ENCODE measurements at regions of chr1 and their contacts with region 1.

Region 1: DNA sequence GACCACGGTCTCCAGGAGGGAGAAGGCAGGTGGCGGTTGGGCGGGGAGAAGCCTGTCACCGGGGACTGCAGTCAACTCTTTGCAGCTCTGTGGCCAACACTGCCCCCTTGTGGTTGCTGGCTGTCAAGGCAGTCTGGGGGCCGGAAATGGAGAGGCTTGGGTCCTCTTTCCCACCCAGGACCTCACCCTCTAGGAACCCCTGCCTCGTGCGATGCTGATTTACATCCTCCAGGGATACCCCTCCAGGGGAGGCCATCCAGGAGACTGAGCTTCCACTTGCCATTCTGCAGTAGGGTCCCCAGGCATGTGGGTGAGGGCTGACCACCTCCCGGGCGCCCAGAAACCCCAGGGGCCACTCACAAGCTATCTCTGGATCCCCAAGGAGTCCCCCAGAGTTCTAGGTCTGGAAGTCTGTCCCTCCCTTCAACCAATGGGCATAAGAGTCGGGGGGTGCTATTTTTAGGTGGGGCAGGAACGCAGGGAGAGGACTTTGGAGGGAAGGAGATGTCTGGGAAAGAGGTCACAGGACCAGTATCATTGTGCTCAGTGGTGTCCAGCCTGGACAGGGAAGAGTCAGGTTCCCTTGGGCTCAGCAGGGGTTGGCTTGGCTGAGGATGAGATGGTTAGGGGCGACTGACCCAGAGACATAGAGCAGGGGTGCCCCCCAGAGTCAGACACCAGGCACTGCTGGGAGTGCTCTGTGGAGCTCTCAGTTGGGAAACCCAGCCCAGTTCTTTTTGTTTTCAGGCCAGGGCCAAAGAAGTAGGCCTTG is 7.1 kb upstream of the GPR61 start:
- DNase-seq: no peak
- H3K4me3 ChIP-seq: no peak overlapping the region
- H3K27me3 ChIP-seq: no peaks in the 10 kb centered on the region; the same call in 1 of the 2 replicates
- CTCF ChIP-seq: peak; percentile 96

Region 2: GRCh38 chr1:108852221-108852975 is 680.2 kb before region 1 on chr1:
- CTCF ChIA-PET with region 1: no interaction called
- POLR2A ChIA-PET with region 1: no interaction called
- DNase-seq: no peak
- H3K4me3 ChIP-seq: no peak overlapping the region
- H3K27me3 ChIP-seq: no peaks in the 10 kb centered on the region; the same call in 1 of the 2 replicates
- CTCF ChIP-seq: no peak

Region 3: GRCh38 chr1:109263597-109264398 is 268.8 kb before region 1 on chr1:
- CTCF ChIA-PET with region 1: interaction called, 20 read pairs
- POLR2A ChIA-PET with region 1: no interaction called
- DNase-seq: no peak
- H3K4me3 ChIP-seq: no peak overlapping the region
- H3K27me3 ChIP-seq: no peaks in the 10 kb centered on the region
- CTCF ChIP-seq: peak; percentile 99

Region 4: GRCh38 chr1:109397538-109398342 is 134.8 kb before region 1 on chr1 and contains the start of gene SORT1:
- CTCF ChIA-PET with region 1: interaction called, 33 read pairs
- POLR2A ChIA-PET with region 1: no interaction called
- DNase-seq: peak; percentile 32
- H3K4me3 ChIP-seq: peak within 1 kb of the TSS; percentile 50
- H3K27me3 ChIP-seq: no peaks in the 10 kb centered on the region
- CTCF ChIP-seq: 0 out of 2 replicates have a peak, but pooled peaks have one; percentile 10
- polyA plus RNA-seq, gene SORT1: 38.6 and 52.6 TPM in 2 replicates

Region 5: DNA sequence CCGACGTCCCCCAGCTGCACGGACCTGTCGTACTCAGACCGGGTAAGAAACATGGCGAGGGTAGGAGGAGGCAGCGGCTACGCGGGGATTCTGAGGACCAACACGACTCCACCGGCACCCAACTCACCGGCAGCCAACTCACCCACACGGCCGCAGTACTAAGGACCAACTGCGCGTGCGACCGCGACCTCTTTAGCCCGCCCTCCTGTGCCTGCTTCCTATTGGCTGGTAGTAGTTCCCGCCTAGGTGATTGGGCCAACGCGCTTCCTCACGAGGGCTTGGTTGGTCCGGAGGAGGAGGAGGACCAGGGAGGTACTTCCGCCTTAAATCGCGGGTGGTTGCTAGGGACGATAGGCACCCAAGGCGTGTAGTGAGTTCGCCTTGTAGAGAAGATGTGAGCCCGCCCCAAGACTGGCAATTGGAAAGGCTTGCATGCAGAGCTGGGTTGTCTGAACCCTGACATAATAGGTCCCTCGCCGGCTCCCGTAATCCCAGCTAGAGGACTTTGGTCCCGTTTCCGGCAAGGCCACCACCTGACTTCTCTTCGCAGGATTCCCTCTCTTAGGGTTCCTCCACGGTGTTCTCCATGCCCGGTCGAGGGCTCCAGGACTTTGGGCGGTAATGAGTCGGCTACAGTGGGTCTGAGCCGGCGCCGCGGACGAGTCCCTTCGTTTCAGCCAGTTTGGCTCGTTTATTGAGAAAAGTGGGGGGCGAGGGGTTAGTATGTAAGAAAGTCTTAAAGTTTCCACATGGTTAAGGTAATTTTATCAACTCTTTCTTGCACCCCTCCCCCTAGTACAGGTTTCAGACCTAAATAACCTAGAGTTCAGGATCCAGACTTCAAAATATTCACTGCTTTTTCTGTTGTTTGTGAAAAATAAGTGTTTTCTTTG is 106.0 kb before region 1 on chr1 and contains the start of gene PSMA5:
- CTCF ChIA-PET with region 1: interaction called, 22 read pairs
- POLR2A ChIA-PET with region 1: no interaction called
- DNase-seq: peak; percentile 98
- H3K4me3 ChIP-seq: peak within 1 kb of the TSS; percentile 77
- H3K27me3 ChIP-seq: no peaks in the 10 kb centered on the region
- CTCF ChIP-seq: no peak
- polyA plus RNA-seq, gene PSMA5: 151 and 226 TPM in 2 replicates

Region 6: DNA sequence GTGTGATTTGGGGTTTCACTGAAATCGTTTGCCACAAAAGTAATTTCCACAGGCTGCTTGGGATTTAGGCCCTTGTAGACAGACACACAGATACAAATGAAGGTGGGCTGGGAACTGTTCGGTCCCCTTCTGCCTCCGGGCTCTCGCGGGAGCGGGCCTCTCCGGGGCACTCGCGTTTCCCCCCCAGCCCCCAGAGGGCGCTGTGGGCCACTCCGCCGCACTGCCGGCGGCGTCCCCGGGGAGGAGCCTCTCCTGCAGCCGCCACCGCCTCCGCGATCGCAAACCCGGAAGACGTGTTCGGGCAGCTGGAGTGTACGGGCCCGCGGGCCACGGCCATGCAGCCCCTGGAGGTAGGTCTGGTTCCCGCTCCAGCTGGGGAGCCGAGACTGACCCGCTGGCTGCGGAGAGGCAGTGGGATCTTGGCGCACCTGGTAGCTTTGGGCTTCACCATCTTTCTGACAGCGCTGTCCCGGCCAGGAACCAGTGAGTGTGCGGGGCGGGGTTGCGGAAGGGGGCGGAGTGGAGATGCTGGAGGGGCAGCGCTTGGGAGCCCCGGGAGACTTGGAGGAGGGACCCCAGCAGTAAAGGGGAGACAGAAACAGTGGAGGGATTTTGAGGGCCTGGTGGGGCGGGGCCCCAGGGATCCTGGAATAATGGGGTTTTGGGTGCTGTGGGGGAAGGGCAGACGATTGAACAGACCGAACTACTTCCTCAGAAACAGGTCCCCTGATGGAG is 38.6 kb before region 1 on chr1 and contains the start of gene CYB561D1:
- CTCF ChIA-PET with region 1: interaction called, 1,371 read pairs
- POLR2A ChIA-PET with region 1: no interaction called
- DNase-seq: no peak
- H3K4me3 ChIP-seq: peak within 1 kb of the TSS; percentile 83
- H3K27me3 ChIP-seq: no peaks in the 10 kb centered on the region
- CTCF ChIP-seq: peak; percentile 87
- polyA plus RNA-seq, gene CYB561D1: 8.2 and 10.8 TPM in 2 replicates

Region 7: GRCh38 chr1:109548321-109549267 is 16.0 kb after region 1 on chr1 and contains the start of gene GNAI3:
- CTCF ChIA-PET with region 1: interaction called, 82 read pairs
- POLR2A ChIA-PET with region 1: no interaction called
- DNase-seq: peak; percentile 70
- H3K4me3 ChIP-seq: peak within 1 kb of the TSS; percentile 98
- H3K27me3 ChIP-seq: no peaks in the 10 kb centered on the region
- CTCF ChIP-seq: no peak
- polyA plus RNA-seq, gene GNAI3: 4.7 and 9.6 TPM in 2 replicates